GM12878 (cell line): ENCODE measurements at regions of chr1 and their contacts with region 1.

Region 1: DNA sequence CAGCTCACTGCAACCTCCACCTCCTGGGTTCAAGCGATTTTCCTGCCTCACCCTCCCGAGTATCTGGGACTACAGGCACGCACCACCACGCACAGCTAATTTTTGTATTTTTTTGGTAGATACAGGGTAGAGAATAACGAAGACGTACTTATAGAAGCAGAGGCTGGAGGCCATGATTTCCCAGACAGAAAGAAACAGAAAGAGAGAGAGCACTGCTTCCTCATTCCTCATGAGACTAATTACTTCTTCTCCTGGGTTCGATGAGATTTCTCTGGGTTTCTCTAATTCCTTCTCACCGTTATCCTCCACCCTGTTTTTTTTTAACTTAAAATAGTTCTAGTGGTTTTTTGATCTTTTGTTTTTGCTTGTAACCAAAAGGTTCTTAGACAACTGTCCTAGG is 23.4 kb upstream of the PTP4A2 start:
- DNase-seq: no peak
- ATAC-seq: peak; percentile 51
- H3K4me3 ChIP-seq: peak overlapping the region; percentile 42; the same call in 1 of the 2 replicates
- H3K27ac ChIP-seq: peak overlapping the region; percentile 96
- H3K4me1 ChIP-seq: peaks cover 70% of the 10 kb centered on the region
- H3K27me3 ChIP-seq: no peaks in the 10 kb centered on the region
- CTCF ChIP-seq: no peak
- EP300 ChIP-seq: no peak
- POLR2A ChIP-seq: no peak
- RAD21 ChIP-seq: no peak

Region 2: GRCh38 chr1:31723828-31724359 is 237.6 kb before region 1 on chr1:
- CTCF ChIA-PET with region 1: no interaction called
- POLR2A ChIA-PET with region 1: no interaction called
- RAD21 ChIA-PET with region 1: no interaction called
- SMC1A ChIA-PET with region 1: no interaction called
- in situ Hi-C with region 1: no loop called
- intact Hi-C with region 1: no loop called
- DNase-seq: no peak
- ATAC-seq: 0 out of 3 replicates have a peak, but pooled peaks have one; percentile 28
- H3K4me3 ChIP-seq: no peak overlapping the region
- H3K27ac ChIP-seq: no peak overlapping the region
- H3K4me1 ChIP-seq: no peaks in the 10 kb centered on the region
- H3K27me3 ChIP-seq: peaks cover 0 to 3% of the 10 kb centered on the region in 2 experiments; a peak in 2 of 4 replicates
- CTCF ChIP-seq: no peak
- EP300 ChIP-seq: no peak
- POLR2A ChIP-seq: no peak
- RAD21 ChIP-seq: no peak

Region 3: GRCh38 chr1:31815752-31816500 is 145.6 kb before region 1 on chr1 and contains the start of gene SPOCD1:
- CTCF ChIA-PET with region 1: interaction called, 85 read pairs
- POLR2A ChIA-PET with region 1: interaction called, 4 read pairs
- RAD21 ChIA-PET with region 1: interaction called, 18 read pairs
- SMC1A ChIA-PET with region 1: interaction called, 69 read pairs
- in situ Hi-C with region 1: loop called (anchors 5 kb)
- intact Hi-C with region 1: loop called (anchors 2 kb)
- DNase-seq: peak; percentile 31
- ATAC-seq: peak; percentile 93
- H3K4me3 ChIP-seq: no peak within 1 kb of the TSS
- H3K27ac ChIP-seq: no peak within 1 kb of the TSS
- H3K4me1 ChIP-seq: no peaks in the 10 kb centered on the region
- H3K27me3 ChIP-seq: no peaks in the 10 kb centered on the region
- CTCF ChIP-seq: peak; percentile 62 to 79 (median 70)
- EP300 ChIP-seq: no peak
- POLR2A ChIP-seq: no peak
- RAD21 ChIP-seq: peak; percentile 81
- polyA plus RNA-seq, gene SPOCD1: 0.02 TPM in 1 of 2 experiments, not detected in the other

Region 4: GRCh38 chr1:31831397-31832378 is 129.8 kb before region 1 on chr1:
- CTCF ChIA-PET with region 1: interaction called, 88 read pairs
- POLR2A ChIA-PET with region 1: interaction called, 4 read pairs
- RAD21 ChIA-PET with region 1: interaction called, 37 read pairs
- SMC1A ChIA-PET with region 1: interaction called, 65 read pairs
- in situ Hi-C with region 1: no loop called
- intact Hi-C with region 1: loop called (anchors 1 kb)
- DNase-seq: no peak
- ATAC-seq: no peak
- H3K4me3 ChIP-seq: no peak overlapping the region
- H3K27ac ChIP-seq: no peak overlapping the region
- H3K4me1 ChIP-seq: peaks cover 16% of the 10 kb centered on the region
- H3K27me3 ChIP-seq: peaks cover 0 to 1% of the 10 kb centered on the region in 2 experiments; a peak in 1 of 4 replicates
- CTCF ChIP-seq: no peak
- EP300 ChIP-seq: no peak
- POLR2A ChIP-seq: no peak
- RAD21 ChIP-seq: no peak

Region 5: DNA sequence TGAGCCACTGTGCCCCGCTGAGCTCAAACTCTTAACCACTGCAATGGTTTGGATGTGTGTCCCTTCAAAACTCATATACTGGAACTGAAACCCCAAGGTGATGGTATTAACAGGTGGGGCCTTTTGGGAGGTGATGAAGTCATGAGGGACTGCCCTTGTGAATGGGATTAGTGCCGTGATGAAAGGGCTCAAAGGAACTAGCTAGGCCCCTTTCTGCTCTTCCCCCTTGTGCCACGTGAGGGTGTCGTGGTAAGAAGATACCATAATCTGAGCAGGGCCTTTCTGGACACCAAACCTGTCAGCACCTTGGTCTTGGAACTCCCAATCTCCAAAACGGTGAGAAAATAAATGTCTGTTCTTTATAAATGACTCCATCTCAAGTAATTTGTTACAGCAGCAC is 100.2 kb before region 1 on chr1:
- CTCF ChIA-PET with region 1: interaction called, 42 read pairs
- POLR2A ChIA-PET with region 1: interaction called, 3 read pairs
- RAD21 ChIA-PET with region 1: interaction called, 51 read pairs
- SMC1A ChIA-PET with region 1: interaction called, 27 read pairs
- in situ Hi-C with region 1: no loop called
- intact Hi-C with region 1: loop called (anchors 1 kb)
- DNase-seq: peak; percentile 24
- ATAC-seq: peak; percentile 94
- H3K4me3 ChIP-seq: no peak overlapping the region
- H3K27ac ChIP-seq: no peak overlapping the region
- H3K4me1 ChIP-seq: peaks cover 6% of the 10 kb centered on the region
- H3K27me3 ChIP-seq: no peaks in the 10 kb centered on the region
- CTCF ChIP-seq: peak; percentile 48 to 55 (median 51)
- EP300 ChIP-seq: no peak
- POLR2A ChIP-seq: no peak
- RAD21 ChIP-seq: peak; percentile 84

Region 6: GRCh38 chr1:31904339-31905092 is 57.0 kb before region 1 on chr1:
- CTCF ChIA-PET with region 1: interaction called, 31 read pairs
- POLR2A ChIA-PET with region 1: no interaction called
- RAD21 ChIA-PET with region 1: interaction called, 7 read pairs
- SMC1A ChIA-PET with region 1: interaction called, 29 read pairs
- in situ Hi-C with region 1: no loop called
- intact Hi-C with region 1: no loop called
- DNase-seq: no peak
- ATAC-seq: peak; percentile 16; the same call in 2 of the 3 replicates
- H3K4me3 ChIP-seq: no peak overlapping the region
- H3K27ac ChIP-seq: no peak overlapping the region
- H3K4me1 ChIP-seq: peaks cover 13% of the 10 kb centered on the region
- H3K27me3 ChIP-seq: no peaks in the 10 kb centered on the region
- CTCF ChIP-seq: no peak
- EP300 ChIP-seq: no peak
- POLR2A ChIP-seq: no peak
- RAD21 ChIP-seq: no peak

Region 7: DNA sequence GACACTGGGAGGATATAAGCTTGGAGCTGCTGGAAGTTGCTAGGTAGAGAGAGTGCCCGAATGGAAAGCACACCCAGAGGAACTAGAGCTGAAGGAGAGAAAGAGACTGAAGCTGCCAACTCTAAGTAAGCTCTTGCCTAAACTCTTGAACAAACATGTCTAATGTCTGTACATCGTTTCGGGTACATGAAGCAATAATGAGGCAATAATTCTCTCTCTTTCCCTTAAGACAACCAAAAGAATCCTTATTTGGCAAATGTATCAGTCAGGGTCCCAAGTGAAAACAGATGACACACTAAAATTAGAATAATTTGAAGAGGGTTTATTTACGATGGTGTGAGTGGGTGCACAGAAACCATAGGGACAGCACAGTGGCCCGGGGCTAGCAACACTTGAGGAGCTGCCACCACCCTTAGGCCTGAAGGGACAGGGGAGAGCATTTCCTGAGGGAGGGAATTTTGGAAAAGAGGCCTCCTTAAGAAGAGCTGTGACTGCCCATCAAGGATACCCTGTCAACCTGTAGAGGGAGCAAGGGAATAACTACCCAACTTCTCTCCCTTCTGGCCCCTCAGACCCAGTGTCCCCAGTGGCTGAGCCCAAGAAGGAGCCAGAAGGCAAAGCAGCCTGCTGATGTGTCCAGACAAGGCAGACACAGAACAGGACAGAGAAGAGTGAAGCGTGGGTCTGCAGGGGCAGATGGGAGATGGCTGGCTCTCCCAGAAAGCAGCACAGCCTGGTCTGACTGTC is 16.0 kb after region 1 on chr1:
- CTCF ChIA-PET with region 1: interaction called, 28 read pairs
- POLR2A ChIA-PET with region 1: interaction called, 5 read pairs
- RAD21 ChIA-PET with region 1: interaction called, 9 read pairs
- SMC1A ChIA-PET with region 1: interaction called, 45 read pairs
- in situ Hi-C with region 1: no loop called
- intact Hi-C with region 1: no loop called
- DNase-seq: no peak
- ATAC-seq: peak; percentile 46
- H3K4me3 ChIP-seq: no peak overlapping the region
- H3K27ac ChIP-seq: no peak overlapping the region
- H3K4me1 ChIP-seq: peaks cover 17% of the 10 kb centered on the region
- H3K27me3 ChIP-seq: no peaks in the 10 kb centered on the region
- CTCF ChIP-seq: peak; percentile 29 to 54 (median 32); a peak in 4 of 6 replicates
- EP300 ChIP-seq: no peak
- POLR2A ChIP-seq: no peak
- RAD21 ChIP-seq: peak; percentile 42

Region 8: DNA sequence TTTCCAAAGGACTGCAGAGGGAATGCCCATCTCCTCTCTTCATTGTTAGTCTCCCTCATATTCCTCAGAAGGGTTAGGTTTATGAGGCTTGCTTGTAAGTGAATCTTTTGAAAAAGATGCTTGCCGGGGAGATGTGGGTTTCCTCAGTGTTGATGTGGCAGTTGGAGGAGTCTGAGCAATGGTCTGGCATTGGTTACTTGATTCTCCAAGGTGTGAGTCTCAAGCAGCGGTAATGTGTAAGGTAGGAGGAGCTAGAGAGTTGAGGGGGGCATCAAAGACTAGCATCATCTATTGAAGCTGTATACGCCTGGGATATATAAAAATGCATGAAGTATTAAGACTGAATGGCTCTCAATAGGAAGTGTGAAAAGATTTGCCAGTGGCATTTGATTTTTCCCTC is 73.6 kb after region 1 on chr1:
- CTCF ChIA-PET with region 1: no interaction called
- POLR2A ChIA-PET with region 1: no interaction called
- RAD21 ChIA-PET with region 1: no interaction called
- SMC1A ChIA-PET with region 1: no interaction called
- in situ Hi-C with region 1: no loop called
- intact Hi-C with region 1: no loop called
- DNase-seq: no peak
- ATAC-seq: no peak
- H3K4me3 ChIP-seq: no peak overlapping the region
- H3K27ac ChIP-seq: no peak overlapping the region
- H3K4me1 ChIP-seq: no peaks in the 10 kb centered on the region
- H3K27me3 ChIP-seq: no peaks in the 10 kb centered on the region
- CTCF ChIP-seq: no peak
- EP300 ChIP-seq: no peak
- POLR2A ChIP-seq: no peak
- RAD21 ChIP-seq: no peak

Region 9: DNA sequence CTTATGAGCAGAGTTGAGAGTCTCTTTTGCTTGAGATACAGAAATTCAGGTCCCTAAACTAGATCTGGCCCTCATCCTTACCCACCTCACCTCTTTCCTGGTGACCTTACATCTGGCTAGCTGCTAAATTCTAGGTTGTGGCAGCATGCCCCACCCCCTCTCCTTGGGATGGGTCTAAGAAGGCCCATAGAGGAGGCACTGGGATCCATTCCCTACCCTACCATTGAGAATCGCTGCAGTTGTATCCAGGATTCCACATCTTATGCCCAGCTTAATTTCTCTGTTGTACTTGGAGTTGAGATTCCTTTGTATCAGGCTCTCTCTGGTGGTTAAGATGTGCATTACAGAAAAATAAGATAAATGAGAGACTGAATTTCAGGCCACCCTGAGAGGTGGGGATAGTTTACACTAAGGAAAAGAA is 101.7 kb after region 1 on chr1:
- CTCF ChIA-PET with region 1: interaction called, 35 read pairs
- POLR2A ChIA-PET with region 1: no interaction called
- RAD21 ChIA-PET with region 1: interaction called, 15 read pairs
- SMC1A ChIA-PET with region 1: interaction called, 20 read pairs
- in situ Hi-C with region 1: no loop called
- intact Hi-C with region 1: loop called (anchors 5 kb)
- DNase-seq: no peak
- ATAC-seq: peak; percentile 80
- H3K4me3 ChIP-seq: no peak overlapping the region
- H3K27ac ChIP-seq: no peak overlapping the region
- H3K4me1 ChIP-seq: peaks cover 4% of the 10 kb centered on the region
- H3K27me3 ChIP-seq: no peaks in the 10 kb centered on the region
- CTCF ChIP-seq: peak; percentile 50 to 71 (median 63); a peak in 5 of 6 replicates
- EP300 ChIP-seq: no peak
- POLR2A ChIP-seq: no peak
- RAD21 ChIP-seq: peak; percentile 76

Region 10: GRCh38 chr1:32273388-32274208 is 312.1 kb after region 1 on chr1:
- CTCF ChIA-PET with region 1: no interaction called
- POLR2A ChIA-PET with region 1: no interaction called
- RAD21 ChIA-PET with region 1: no interaction called
- SMC1A ChIA-PET with region 1: no interaction called
- in situ Hi-C with region 1: no loop called
- intact Hi-C with region 1: no loop called
- DNase-seq: no peak
- ATAC-seq: peak; percentile 68
- H3K4me3 ChIP-seq: no peak overlapping the region
- H3K27ac ChIP-seq: peak overlapping the region; percentile 31; the same call in 1 of the 2 replicates
- H3K4me1 ChIP-seq: peaks cover 7% of the 10 kb centered on the region
- H3K27me3 ChIP-seq: no peaks in the 10 kb centered on the region
- CTCF ChIP-seq: no peak
- EP300 ChIP-seq: no peak
- POLR2A ChIP-seq: no peak; the same call in 1 of the 2 replicates
- RAD21 ChIP-seq: no peak